PC-3 (cell line): ENCODE measurements at regions of chr7 and their contacts with region 1.

Region 1: GRCh38 chr7:111527545-111527944 is 34.7 kb downstream of the IMMP2L start:
- DNase-seq: no peak
- ATAC-seq: no peak
- H3K4me3 ChIP-seq: no peak overlapping the region
- H3K27ac ChIP-seq: peak overlapping the region; percentile 95
- H3K4me1 ChIP-seq: peaks cover 33% of the 10 kb centered on the region
- H3K27me3 ChIP-seq: no peaks in the 10 kb centered on the region
- CTCF ChIP-seq: no peak

Region 2: DNA sequence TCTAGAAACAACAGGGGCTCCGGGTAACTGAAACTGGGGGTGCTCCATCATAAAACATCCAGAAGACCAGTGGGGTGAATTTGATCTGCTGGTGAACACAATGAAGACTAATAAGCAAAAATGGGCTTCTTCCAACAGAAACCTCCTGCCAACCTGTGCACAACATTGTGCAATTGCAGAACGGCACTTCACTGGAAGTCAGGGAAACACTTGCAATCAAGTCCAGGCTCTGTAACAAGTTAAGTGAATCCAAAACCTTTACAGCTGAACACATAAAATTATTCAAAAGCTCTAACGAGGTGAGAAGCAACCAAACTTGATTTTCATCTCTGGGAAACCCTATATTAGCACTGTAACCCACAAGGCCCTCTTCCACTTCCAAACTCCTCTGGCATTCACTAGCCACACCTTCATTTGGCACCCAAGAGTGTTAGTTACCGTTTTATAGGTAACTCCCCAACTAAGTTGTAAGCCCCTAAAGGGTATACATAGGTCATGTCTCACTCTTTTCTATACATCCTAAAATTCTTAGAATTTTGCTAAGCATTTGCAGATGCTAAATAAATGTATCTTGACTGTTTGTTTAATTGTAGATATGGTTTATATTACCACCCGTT is 12.8 kb after region 1 on chr7:
- CTCF ChIA-PET with region 1: no interaction called
- POLR2A ChIA-PET with region 1: no interaction called
- intact Hi-C with region 1: loop called (anchors 2 kb)
- DNase-seq: no peak
- ATAC-seq: no peak
- H3K4me3 ChIP-seq: no peak overlapping the region
- H3K27ac ChIP-seq: no peak overlapping the region
- H3K4me1 ChIP-seq: no peaks in the 10 kb centered on the region
- H3K27me3 ChIP-seq: no peaks in the 10 kb centered on the region
- CTCF ChIP-seq: no peak

Region 3: GRCh38 chr7:111588065-111588433 is 60.5 kb after region 1 on chr7:
- CTCF ChIA-PET with region 1: no interaction called
- POLR2A ChIA-PET with region 1: interaction called, 10 read pairs
- intact Hi-C with region 1: no loop called
- DNase-seq: peak; percentile 53
- ATAC-seq: peak; percentile 56; the same call in 1 of the 2 replicates
- H3K4me3 ChIP-seq: no peak overlapping the region
- H3K27ac ChIP-seq: peak overlapping the region; percentile 67
- H3K4me1 ChIP-seq: peaks cover 15% of the 10 kb centered on the region; the same call in 1 of the 2 replicates
- H3K27me3 ChIP-seq: no peaks in the 10 kb centered on the region
- CTCF ChIP-seq: no peak